CD8-positive, alpha-beta T cell (primary cell): ENCODE measurements at regions of chr4 and their contacts with region 1.

Region 1: GRCh38 chr4:118835571-118836300 is at the start of gene SEC24D:
- DNase-seq: peak; percentile 67 to 90 (median 79)
- ATAC-seq: peak; percentile 81
- H3K4me3 ChIP-seq: peak within 1 kb of the TSS; percentile 76 to 80
- H3K4me3 Mint-ChIP-seq: peak within 1 kb of the TSS; percentile 100
- H3K27ac ChIP-seq: peak within 1 kb of the TSS; percentile 69 to 87
- H3K27ac Mint-ChIP-seq: peak within 1 kb of the TSS; percentile 97
- H3K4me1 ChIP-seq: peaks cover 6% of the 10 kb centered on the region
- H3K4me1 Mint-ChIP-seq: peaks cover 26% of the 10 kb centered on the region
- H3K27me3 ChIP-seq: no peaks in the 10 kb centered on the region
- H3K27me3 Mint-ChIP-seq: no peaks in the 10 kb centered on the region
- CTCF ChIP-seq: no peak
- total RNA-seq, gene SEC24D: 16.7 to 17.2 TPM

Region 2: GRCh38 chr4:118586357-118586790 is 249.4 kb before region 1 on chr4:
- CTCF ChIA-PET with region 1: no interaction called
- POLR2A ChIA-PET with region 1: no interaction called
- intact Hi-C with region 1: loop called (anchors 5 to 10 kb)
- DNase-seq: no peak
- ATAC-seq: no peak
- H3K4me3 ChIP-seq: no peak overlapping the region
- H3K4me3 Mint-ChIP-seq: no peak overlapping the region
- H3K27ac ChIP-seq: no peak overlapping the region
- H3K27ac Mint-ChIP-seq: no peak overlapping the region
- H3K4me1 ChIP-seq: peaks cover 7% of the 10 kb centered on the region
- H3K4me1 Mint-ChIP-seq: peaks cover 9% of the 10 kb centered on the region
- H3K27me3 ChIP-seq: peaks cover 0 to 4% of the 10 kb centered on the region in 2 experiments
- H3K27me3 Mint-ChIP-seq: peaks cover 24% of the 10 kb centered on the region
- CTCF ChIP-seq: no peak

Region 3: GRCh38 chr4:118684873-118685811 is 150.6 kb before region 1 on chr4 and contains the start of gene METTL14:
- CTCF ChIA-PET with region 1: no interaction called
- POLR2A ChIA-PET with region 1: no interaction called
- intact Hi-C with region 1: loop called (anchors 1 to 10 kb)
- DNase-seq: peak; percentile 71 to 92 (median 85)
- ATAC-seq: peak; percentile 91
- H3K4me3 ChIP-seq: peak within 1 kb of the TSS; percentile 86 to 88
- H3K4me3 Mint-ChIP-seq: peak within 1 kb of the TSS; percentile 92
- H3K27ac ChIP-seq: peak within 1 kb of the TSS; percentile 84 to 94
- H3K27ac Mint-ChIP-seq: peak within 1 kb of the TSS; percentile 98
- H3K4me1 ChIP-seq: peaks cover 15% of the 10 kb centered on the region
- H3K4me1 Mint-ChIP-seq: peaks cover 35% of the 10 kb centered on the region
- H3K27me3 ChIP-seq: no peaks in the 10 kb centered on the region
- H3K27me3 Mint-ChIP-seq: no peaks in the 10 kb centered on the region
- CTCF ChIP-seq: no peak
- total RNA-seq, gene METTL14: 68.8 to 70.2 TPM

Region 4: DNA sequence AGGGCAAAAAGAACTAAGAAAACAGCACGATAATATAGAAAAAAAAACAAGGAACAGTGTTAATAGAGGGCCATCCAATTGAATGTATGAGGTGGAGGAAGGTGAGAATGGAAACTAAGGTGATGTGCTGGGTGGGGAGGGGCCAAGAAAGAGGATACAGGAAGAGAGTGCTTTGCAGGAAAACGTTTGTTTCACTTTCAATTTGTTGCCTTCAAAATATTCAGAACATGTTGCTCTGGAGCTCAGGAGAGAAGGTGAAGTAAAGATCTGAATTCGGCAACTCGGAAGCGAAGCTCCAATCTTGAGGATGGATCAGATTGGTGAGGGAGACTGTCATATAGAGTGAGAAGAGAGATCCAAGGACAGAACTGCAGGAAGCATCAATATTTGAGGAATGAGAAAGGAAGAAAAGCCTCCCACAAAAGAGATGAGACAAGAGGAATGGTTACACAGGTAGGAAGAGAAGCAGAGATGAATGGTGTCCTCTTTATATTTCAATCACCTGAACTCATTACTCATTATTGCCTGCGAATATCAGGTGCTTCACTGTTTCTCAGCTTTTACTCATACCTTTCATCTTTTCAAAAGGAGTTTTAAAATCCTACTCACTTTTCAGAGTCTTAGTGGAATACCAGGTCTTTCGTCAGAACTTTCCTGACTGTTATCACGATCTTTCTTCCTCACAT is 14.9 kb after region 1 on chr4:
- CTCF ChIA-PET with region 1: interaction called, 16 read pairs
- POLR2A ChIA-PET with region 1: interaction called, 5 read pairs
- intact Hi-C with region 1: loop called (anchors 1 kb)
- DNase-seq: peak in 6 of 9 experiments; percentile 36 to 78 (median 48)
- ATAC-seq: peak; percentile 95
- H3K4me3 ChIP-seq: peak overlapping the region; percentile 55 to 63
- H3K4me3 Mint-ChIP-seq: peak overlapping the region; percentile 92
- H3K27ac ChIP-seq: peak overlapping the region; percentile 48 to 80
- H3K27ac Mint-ChIP-seq: peak overlapping the region; percentile 96
- H3K4me1 ChIP-seq: peaks cover 7% of the 10 kb centered on the region
- H3K4me1 Mint-ChIP-seq: peaks cover 35% of the 10 kb centered on the region
- H3K27me3 ChIP-seq: no peaks in the 10 kb centered on the region
- H3K27me3 Mint-ChIP-seq: peaks cover 10% of the 10 kb centered on the region
- CTCF ChIP-seq: no peak

Region 5: DNA sequence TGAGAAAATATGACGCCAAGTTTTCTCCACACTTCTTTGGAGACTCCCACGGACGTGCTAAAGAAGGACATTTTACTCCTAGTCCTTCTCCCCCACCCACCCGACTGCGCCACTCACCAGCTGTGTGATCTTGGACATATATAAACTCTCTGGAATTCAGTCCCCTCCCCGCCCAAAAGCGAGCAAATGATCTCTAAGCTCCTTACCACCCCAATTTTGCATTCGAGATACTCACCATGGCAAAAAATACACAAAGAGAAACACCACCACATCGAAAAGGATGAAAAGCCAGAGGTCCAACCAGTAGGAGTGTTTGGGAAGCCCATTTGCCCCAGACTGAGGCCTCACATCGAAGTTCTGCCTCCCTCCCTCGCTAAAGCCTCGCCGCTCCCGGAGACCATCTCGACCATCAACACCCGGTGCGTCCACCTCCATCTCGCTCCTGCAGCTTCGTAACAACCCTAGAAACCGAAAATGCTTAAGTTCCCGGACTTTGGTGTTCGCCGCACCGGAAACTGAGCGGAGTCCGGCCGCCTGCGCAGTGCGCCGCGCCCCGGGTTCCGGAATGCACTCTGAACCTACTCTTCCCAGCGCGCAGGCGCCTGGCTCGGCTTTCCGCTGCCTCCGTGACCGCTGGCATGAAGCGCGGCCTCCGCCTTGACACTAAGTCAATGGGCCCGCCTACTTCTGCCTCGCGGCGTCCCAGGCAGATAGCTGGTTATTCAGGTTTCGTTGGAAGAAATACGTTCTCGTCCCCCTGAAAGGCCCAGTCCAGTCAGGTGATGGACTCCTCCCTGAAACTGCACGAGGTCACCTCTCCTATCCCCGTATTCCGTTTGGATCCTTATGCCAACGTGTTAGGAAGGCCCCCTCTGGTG is 464.6 kb after region 1 on chr4:
- CTCF ChIA-PET with region 1: no interaction called
- POLR2A ChIA-PET with region 1: interaction called, 3 read pairs
- intact Hi-C with region 1: loop called (anchors 5 kb)
- DNase-seq: peak; percentile 79 to 95 (median 89)
- ATAC-seq: peak; percentile 94
- H3K4me3 ChIP-seq: peak overlapping the region; percentile 92 to 97
- H3K4me3 Mint-ChIP-seq: peak overlapping the region; percentile 99
- H3K27ac ChIP-seq: peak overlapping the region; percentile 93 to 95
- H3K27ac Mint-ChIP-seq: peak overlapping the region; percentile 99
- H3K4me1 ChIP-seq: peaks cover 20% of the 10 kb centered on the region
- H3K4me1 Mint-ChIP-seq: peaks cover 35% of the 10 kb centered on the region
- H3K27me3 ChIP-seq: no peaks in the 10 kb centered on the region
- H3K27me3 Mint-ChIP-seq: no peaks in the 10 kb centered on the region
- CTCF ChIP-seq: no peak

Region 6: DNA sequence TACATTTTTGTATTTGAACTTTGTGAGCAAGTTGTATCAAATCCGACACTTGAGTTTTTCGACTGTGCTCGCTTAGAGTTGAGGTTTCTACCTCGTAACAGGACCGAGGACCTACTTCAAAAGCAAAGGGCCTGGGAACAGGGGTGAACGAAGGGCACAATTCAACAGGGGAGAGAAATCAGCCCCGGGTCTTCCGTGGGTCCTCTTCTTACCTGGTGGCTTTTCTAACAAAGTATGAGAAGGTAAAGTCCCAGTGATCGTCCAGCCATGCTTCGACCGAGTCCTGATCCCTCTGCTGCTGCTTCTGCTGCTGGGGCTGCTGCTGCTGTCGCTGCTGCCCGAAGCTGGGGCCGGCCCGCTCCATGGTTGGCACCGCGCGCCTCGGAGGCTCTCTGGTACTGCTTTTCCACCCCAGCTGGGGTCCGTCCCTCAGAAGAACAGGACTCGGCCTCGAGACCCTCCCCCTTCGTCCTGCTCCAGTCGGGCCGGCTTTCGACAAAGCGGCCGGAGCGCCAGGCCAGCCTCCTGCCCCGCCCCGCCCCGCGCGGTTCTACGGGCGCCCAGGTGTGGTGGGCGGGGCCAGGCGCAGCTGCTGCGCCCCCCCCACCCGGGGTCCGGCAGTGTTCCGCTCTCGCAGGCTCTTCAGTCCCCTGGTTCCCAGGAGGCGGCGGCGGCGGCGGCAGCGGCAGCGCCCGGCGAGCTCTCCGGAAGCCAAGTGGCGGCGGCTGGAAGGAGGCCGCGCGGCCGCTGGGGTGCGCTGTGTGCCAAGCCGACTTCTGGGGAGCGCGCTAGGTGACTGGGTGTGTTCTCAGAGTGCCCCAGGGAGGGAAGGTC is 792.8 kb after region 1 on chr4 and contains the start of gene PDE5A:
- CTCF ChIA-PET with region 1: no interaction called
- POLR2A ChIA-PET with region 1: no interaction called
- intact Hi-C with region 1: loop called (anchors 5 to 10 kb)
- DNase-seq: peak; percentile 52 to 85 (median 76)
- ATAC-seq: peak; percentile 76
- H3K4me3 ChIP-seq: peak within 1 kb of the TSS; percentile 73 to 78
- H3K4me3 Mint-ChIP-seq: peak within 1 kb of the TSS; percentile 88
- H3K27ac ChIP-seq: peak within 1 kb of the TSS in 1 of 2 experiments; percentile 50
- H3K27ac Mint-ChIP-seq: peak within 1 kb of the TSS; percentile 71
- H3K4me1 ChIP-seq: peaks cover 9% of the 10 kb centered on the region
- H3K4me1 Mint-ChIP-seq: peaks cover 23% of the 10 kb centered on the region
- H3K27me3 ChIP-seq: no peaks in the 10 kb centered on the region
- H3K27me3 Mint-ChIP-seq: peaks cover 7% of the 10 kb centered on the region
- CTCF ChIP-seq: peak; percentile 74
- total RNA-seq, gene PDE5A: 0.11 to 0.25 TPM

Region 7: GRCh38 chr4:119785963-119786362 is 950.2 kb after region 1 on chr4:
- CTCF ChIA-PET with region 1: no interaction called
- POLR2A ChIA-PET with region 1: no interaction called
- intact Hi-C with region 1: no loop called
- DNase-seq: peak in 2 of 9 experiments; percentile 1 to 3
- ATAC-seq: no peak
- H3K4me3 ChIP-seq: no peak overlapping the region
- H3K4me3 Mint-ChIP-seq: no peak overlapping the region
- H3K27ac ChIP-seq: no peak overlapping the region
- H3K27ac Mint-ChIP-seq: no peak overlapping the region
- H3K4me1 ChIP-seq: no peaks in the 10 kb centered on the region
- H3K4me1 Mint-ChIP-seq: no peaks in the 10 kb centered on the region
- H3K27me3 ChIP-seq: no peaks in the 10 kb centered on the region
- H3K27me3 Mint-ChIP-seq: peaks cover 4% of the 10 kb centered on the region
- CTCF ChIP-seq: no peak